ENCODE measurements at regions of chr12 and their contacts with region 1.

Region 1: GRCh38 chr12:107079172-107080011 is 14.0 kb downstream of the CRY1 start:
- DNase-seq: no peak
- CTCF ChIP-seq: peak; percentile 54

Region 2: DNA sequence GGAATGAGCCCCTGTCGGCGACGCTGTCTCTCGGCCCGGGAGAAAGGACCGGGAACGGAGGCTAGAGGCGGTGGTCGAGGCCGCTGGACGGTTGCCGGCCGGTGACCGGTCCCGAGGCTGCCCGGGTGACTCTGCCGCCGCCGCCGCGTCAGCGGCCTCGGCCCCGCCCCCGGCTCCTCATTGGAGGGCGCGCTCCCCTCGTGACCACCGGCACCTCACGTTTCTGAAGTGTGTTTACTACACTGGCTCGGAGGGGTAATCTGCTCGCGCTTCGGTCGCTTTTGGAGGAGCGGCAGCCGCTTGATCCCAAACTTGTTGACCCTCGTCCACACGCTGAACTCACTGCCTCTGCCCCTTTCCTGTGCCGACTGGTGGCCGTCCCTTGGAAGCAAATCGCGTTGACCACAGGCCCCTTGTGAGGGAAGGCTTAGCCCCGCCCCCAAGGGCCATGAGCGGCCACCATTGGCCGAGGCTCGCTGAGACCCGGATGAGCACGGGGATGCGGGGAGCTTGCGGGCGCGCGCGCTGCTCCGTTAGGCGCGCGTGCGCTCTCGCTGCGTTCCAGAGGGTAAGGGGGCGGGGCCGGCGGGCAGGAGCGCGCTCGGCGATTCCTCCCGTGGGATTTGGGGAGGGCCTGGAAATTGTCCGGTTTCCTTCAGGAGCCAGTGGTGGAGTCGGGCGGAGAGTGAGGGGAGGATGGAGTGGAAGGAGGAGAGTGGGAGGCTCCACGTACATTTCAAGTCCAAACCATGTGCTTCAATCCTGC is 14.2 kb after region 1 on chr12 and contains the start of gene CRY1:
- CTCF ChIA-PET with region 1: interaction called, 13 read pairs
- POLR2A ChIA-PET with region 1: no interaction called
- DNase-seq: peak; percentile 90
- CTCF ChIP-seq: no peak

Region 3: DNA sequence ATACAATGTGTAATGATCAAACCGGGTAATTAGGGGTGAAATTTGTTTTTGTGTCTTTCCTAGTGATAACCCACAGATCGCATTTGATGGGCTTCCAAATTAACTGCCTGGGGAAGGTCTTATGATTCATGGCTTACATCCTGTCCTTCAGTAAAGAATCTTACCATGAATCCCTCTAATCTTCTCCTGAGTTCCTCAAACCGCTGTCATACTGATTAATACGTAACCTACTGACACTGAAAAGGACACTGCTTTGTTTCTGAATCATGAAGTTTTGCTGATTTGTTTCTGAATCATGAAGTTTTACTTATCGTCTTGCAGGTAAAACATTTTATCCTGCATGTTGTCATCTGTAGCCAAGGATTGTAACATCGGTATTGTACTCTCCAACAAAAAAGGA is 66.0 kb after region 1 on chr12:
- CTCF ChIA-PET with region 1: no interaction called
- POLR2A ChIA-PET with region 1: no interaction called
- DNase-seq: no peak
- CTCF ChIP-seq: no peak

Measured in GM10248 (cell line).